ENCODE measurements at regions of chr7 and their contacts with region 1.

Region 1: DNA sequence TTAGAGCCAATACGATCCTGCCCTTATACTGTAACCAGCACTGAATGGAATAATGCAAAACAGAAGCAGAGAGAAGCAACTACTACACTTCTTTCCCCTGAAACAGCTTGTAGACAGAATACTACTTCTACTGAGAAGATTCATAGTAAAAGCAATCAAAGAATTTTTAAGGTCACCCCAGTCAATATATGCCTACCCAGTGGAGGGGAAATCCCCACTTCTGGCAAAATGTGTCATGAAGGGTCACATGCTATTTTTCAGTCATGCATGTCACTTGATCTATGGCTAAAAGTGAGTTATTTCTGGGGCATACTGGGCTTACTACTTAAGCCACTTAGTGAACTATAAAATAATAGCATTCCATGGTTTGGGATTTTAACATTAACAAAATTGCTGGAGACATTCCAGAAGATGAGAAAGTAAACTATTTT is 25.6 kb downstream of the IRF5 start:
- DNase-seq: peak; percentile 76
- H3K4me3 Mint-ChIP-seq: peak overlapping the region; percentile 50
- H3K27ac Mint-ChIP-seq: peak overlapping the region; percentile 87
- H3K4me1 Mint-ChIP-seq: peaks cover 30% of the 10 kb centered on the region
- H3K27me3 Mint-ChIP-seq: no peaks in the 10 kb centered on the region

Region 2: GRCh38 chr7:128937647-128938543 is 25.4 kb before region 1 on chr7 and contains the start of gene IRF5:
- intact Hi-C with region 1: loop called (anchors 1 kb)
- DNase-seq: peak; percentile 79
- H3K4me3 Mint-ChIP-seq: peak within 1 kb of the TSS; percentile 91
- H3K27ac Mint-ChIP-seq: peak within 1 kb of the TSS; percentile 85
- H3K4me1 Mint-ChIP-seq: peaks cover 37% of the 10 kb centered on the region
- H3K27me3 Mint-ChIP-seq: peaks cover 17% of the 10 kb centered on the region
- total RNA-seq, gene IRF5: 16.2 and 18.6 TPM in 2 replicates

Region 3: GRCh38 chr7:129009437-129009836 is 46.1 kb after region 1 on chr7:
- intact Hi-C with region 1: loop called (anchors 1 kb)
- DNase-seq: no peak
- H3K4me3 Mint-ChIP-seq: no peak overlapping the region
- H3K27ac Mint-ChIP-seq: peak overlapping the region; percentile 19
- H3K4me1 Mint-ChIP-seq: peaks cover 27% of the 10 kb centered on the region
- H3K27me3 Mint-ChIP-seq: no peaks in the 10 kb centered on the region

Measured in activated CD4-positive, alpha-beta T cell treated with anti-CD3 and anti-CD28 coated beads, Interleukin-2, amount 10 ng/mL, durations not matched to agents 24 days and 14 days (primary cell).